Astrocyte of the cerebellum (primary cell): ENCODE measurements at regions of chr13 and their contacts with region 1.

Region 1: GRCh38 chr13:30932481-30933353 is at the start of gene TEX26:
- DNase-seq: no peak
- H3K4me3 ChIP-seq: peak within 1 kb of the TSS; percentile 9
- CTCF ChIP-seq: peak; percentile 38

Region 2: DNA sequence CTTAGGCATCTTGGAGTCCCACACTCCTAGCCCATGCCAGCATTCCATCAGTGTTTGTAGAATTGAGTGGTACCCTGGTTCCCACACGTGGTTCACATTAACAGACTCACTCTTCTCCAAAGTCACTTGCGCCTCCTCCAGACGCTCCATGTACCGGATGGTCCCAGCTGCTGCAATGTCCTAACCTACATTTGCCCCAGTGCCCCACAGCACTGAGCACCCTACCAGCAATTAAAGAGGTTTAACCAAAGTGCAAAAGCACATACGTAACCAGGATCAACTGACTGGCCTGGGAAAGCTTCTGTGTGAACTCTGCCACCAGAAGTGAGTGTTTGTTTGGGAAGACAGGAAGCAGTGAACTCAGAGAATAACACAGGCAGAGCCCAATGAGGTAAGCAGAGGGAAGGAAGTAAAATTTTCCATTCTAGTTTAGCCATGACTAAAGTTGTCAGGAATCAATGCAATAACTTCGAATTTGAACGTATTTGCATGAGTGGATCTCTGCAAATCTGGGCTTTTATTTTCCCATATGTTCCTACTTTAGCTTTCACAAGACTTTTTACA is 34.0 kb before region 1 on chr13:
- in situ Hi-C with region 1: loop called (anchors 5 kb)
- DNase-seq: no peak
- H3K4me3 ChIP-seq: no peak overlapping the region
- CTCF ChIP-seq: no peak

Region 3: GRCh38 chr13:31452525-31452924 is 519.8 kb after region 1 on chr13:
- in situ Hi-C with region 1: no loop called
- DNase-seq: no peak
- H3K4me3 ChIP-seq: no peak overlapping the region
- CTCF ChIP-seq: no peak